Activated CD4-positive, alpha-beta T cell treated with anti-CD3 and anti-CD28 coated beads for 36 hours (primary cell): ENCODE measurements at regions of chr12 and their contacts with region 1.

Region 1: DNA sequence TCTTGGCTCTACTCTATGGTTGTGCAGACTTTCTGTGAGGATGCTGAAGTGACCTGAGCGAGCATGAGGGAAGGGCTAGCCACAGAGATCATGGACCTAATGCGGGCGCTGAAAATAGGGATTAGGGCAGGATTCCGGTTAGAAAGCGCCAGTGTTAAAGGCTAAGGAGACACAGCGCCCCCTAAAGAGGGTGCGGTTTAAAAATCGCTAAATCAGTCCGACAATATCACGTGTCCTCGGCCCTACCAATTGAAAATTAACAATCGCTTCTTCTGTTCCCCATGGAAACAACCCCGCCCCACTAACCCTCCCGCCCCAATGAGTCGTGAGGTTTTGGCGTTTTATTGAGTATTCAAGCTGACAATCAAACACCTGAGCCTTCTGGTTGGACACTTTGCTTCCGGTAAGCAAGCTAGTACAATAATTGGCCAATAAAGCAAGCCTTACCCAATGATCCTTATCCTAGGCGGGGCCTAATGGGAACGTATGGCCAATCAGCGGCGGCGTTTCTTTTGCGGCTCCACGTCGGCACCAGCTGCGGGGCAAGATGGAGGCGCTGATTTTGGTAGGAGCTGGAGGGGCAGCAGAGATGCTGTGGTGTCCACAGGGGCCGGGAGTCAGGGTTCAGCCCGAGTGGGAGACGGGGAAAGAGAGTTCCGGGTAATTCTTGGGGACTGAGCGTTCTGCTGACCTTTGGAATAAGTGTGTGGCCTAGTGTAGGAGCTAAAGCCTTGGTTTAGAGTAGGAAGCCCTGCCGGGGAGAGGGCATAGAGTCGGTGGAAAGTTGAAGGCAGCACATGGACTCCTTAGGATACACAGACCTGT is at the start of gene COPZ1:
- DNase-seq: peak; percentile 96
- ATAC-seq: peak; percentile 99
- H3K4me3 Mint-ChIP-seq: peak within 1 kb of the TSS; percentile 96
- H3K27ac Mint-ChIP-seq: peak within 1 kb of the TSS; percentile 92
- H3K4me1 Mint-ChIP-seq: peaks cover 36% of the 10 kb centered on the region
- H3K27me3 Mint-ChIP-seq: no peaks in the 10 kb centered on the region
- total RNA-seq, gene COPZ1: 95.2 to 98.7 TPM

Region 2: DNA sequence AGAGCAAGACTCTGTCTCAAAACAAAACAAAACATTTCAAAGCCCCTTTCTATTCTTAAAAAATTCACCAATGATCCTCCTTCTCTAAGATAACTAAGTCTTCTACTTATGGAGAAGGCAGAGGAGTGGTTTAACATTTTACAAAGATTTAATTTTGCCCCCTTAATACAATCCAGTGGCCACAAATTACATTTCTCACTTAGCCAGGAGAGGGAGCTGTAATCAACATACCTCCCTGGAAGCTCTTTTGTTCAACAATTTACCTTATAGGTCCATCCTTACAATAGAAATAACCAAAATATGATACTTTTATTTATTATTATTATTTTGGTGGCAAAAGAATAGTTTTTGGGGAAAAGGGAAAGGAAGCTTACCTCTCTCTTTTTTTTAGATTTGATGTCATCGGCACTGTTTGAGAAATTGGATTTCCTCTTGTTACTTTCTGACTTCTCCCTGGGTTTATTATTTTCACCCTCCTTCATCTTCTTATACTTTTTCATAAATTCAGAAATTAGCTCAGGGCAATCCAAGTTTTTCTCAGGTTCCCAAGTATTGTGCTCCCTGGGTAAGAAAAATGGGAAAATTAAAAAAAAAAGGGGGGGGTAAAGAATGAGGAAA is 73.1 kb before region 1 on chr12:
- CTCF ChIA-PET with region 1: interaction called, 13 read pairs
- POLR2A ChIA-PET with region 1: interaction called, 5 read pairs
- intact Hi-C with region 1: loop called in 1 of 2 experiments (anchors 2 kb)
- DNase-seq: no peak
- ATAC-seq: peak; percentile 75
- H3K4me3 Mint-ChIP-seq: no peak overlapping the region
- H3K27ac Mint-ChIP-seq: no peak overlapping the region
- H3K4me1 Mint-ChIP-seq: peaks cover 10% of the 10 kb centered on the region
- H3K27me3 Mint-ChIP-seq: no peaks in the 10 kb centered on the region

Region 3: GRCh38 chr12:54300732-54301427 is 23.9 kb before region 1 on chr12 and contains the start of gene NFE2:
- CTCF ChIA-PET with region 1: interaction called, 21 read pairs
- POLR2A ChIA-PET with region 1: interaction called, 6 read pairs
- intact Hi-C with region 1: no loop called
- DNase-seq: peak; percentile 58
- ATAC-seq: peak; percentile 62
- H3K4me3 Mint-ChIP-seq: no peak within 1 kb of the TSS
- H3K27ac Mint-ChIP-seq: no peak within 1 kb of the TSS
- H3K4me1 Mint-ChIP-seq: peaks cover 13% of the 10 kb centered on the region
- H3K27me3 Mint-ChIP-seq: peaks cover 54% of the 10 kb centered on the region
- total RNA-seq, gene NFE2: not detected

Region 4: DNA sequence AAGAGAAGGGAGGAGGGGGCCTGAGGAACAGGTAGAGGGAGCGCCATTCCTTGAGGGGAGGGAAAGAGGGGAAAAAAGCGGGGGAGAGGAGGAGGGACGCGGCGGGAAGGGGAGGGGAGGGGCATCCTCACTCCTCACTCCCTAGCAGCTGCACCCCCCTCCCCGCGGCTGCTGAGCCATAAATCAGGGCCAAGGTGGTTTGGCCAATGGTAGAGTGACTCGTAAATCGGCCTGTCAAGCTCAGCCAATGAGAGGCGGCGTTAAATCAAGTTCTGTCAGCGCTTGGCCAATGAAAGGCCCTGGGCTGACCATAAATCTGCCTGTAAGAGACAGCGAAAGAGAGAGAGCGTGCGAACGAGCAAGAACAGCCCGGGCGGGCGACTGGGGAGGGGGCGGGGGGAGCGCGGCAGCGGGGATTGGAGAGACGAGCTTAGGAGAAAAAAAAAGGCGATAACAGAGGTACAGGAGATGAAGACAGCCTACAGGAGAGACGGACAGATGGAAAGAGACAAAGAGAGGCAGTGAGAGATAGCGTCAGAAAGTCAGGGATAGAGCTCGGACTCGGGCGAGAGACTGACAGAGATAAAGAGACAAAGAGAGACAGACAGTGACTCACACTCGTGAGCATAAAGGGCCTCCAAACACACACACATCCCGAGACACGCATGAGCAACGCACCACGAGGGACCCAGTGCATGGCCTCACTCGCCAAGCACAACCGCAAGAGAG is 34.4 kb after region 1 on chr12:
- CTCF ChIA-PET with region 1: interaction called, 25 read pairs
- POLR2A ChIA-PET with region 1: interaction called, 9 read pairs
- intact Hi-C with region 1: loop called (anchors 1 kb)
- DNase-seq: peak; percentile 96
- ATAC-seq: peak; percentile 93
- H3K4me3 Mint-ChIP-seq: no peak overlapping the region
- H3K27ac Mint-ChIP-seq: no peak overlapping the region
- H3K4me1 Mint-ChIP-seq: peaks cover 18% of the 10 kb centered on the region
- H3K27me3 Mint-ChIP-seq: no peaks in the 10 kb centered on the region

Region 5: GRCh38 chr12:54497883-54498282 is 173.1 kb after region 1 on chr12:
- CTCF ChIA-PET with region 1: no interaction called
- POLR2A ChIA-PET with region 1: no interaction called
- intact Hi-C with region 1: loop called in 1 of 2 experiments (anchors 1 kb)
- DNase-seq: no peak
- ATAC-seq: peak; percentile 4
- H3K4me3 Mint-ChIP-seq: peak overlapping the region; percentile 99
- H3K27ac Mint-ChIP-seq: peak overlapping the region; percentile 98
- H3K4me1 Mint-ChIP-seq: peaks cover 39% of the 10 kb centered on the region
- H3K27me3 Mint-ChIP-seq: no peaks in the 10 kb centered on the region